Esophagus muscularis mucosa (tissue), 4 donors: ENCODE measurements at regions of chr19 and their contacts with region 1.

Region 1: GRCh38 chr19:19900729-19901444 is at the start of gene ZNF93:
- DNase-seq: peak; percentile 99
- H3K4me3 ChIP-seq: peak within 1 kb of the TSS; percentile 68 to 77 (median 74)
- H3K27ac ChIP-seq: peak within 1 kb of the TSS; percentile 86 to 94 (median 92)
- H3K4me1 ChIP-seq: peaks cover 9 to 16% (median 13%) of the 10 kb centered on the region in 4 donors
- H3K27me3 ChIP-seq: no peaks in the 10 kb centered on the region
- CTCF ChIP-seq: no peak
- EP300 ChIP-seq: no peak
- POLR2A ChIP-seq: no peak
- total RNA-seq, gene ZNF93: 1.2 to 4.1 (median 2.1) TPM

Region 2: DNA sequence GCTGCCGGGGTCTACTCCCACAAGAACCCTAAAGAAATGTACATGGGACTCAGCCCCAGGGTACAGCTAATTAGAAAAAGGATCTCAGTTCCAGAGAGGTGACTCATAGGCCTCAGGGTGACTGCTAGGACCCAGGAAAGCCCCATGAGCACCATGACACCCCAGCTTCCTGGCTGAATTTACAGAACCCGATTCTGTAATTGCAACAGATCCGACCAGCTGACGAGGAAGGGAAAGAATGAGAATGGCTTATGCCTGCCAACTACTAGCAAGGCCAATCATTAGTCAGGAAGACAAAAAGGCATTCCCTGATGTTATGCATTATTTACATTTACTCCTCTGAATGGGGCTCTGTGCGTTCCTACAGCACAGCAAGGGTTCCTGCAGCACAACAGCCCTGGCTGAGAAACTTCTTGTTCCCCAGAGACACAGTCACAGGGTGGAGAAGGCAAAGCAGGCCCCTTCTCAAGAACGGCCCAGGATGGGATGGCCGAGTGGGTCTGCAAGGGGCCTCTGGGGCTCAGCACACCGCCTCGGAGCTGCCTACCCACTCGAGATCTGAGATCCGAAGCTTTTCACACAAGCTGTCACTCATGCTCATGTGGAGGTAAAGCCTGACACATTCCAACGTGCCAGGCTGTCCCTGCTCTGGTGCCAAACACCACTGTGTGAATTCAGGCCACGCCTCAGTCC is 309.6 kb before region 1 on chr19:
- intact Hi-C with region 1: no loop called
- DNase-seq: no peak
- H3K4me3 ChIP-seq: peak overlapping the region in 1 of 4 donors; percentile 6
- H3K27ac ChIP-seq: peak overlapping the region; percentile 23 to 60 (median 34)
- H3K4me1 ChIP-seq: peaks cover 4 to 14% (median 13%) of the 10 kb centered on the region in 4 donors
- H3K27me3 ChIP-seq: no peaks in the 10 kb centered on the region
- CTCF ChIP-seq: no peak
- EP300 ChIP-seq: no peak
- POLR2A ChIP-seq: no peak

Region 3: GRCh38 chr19:19663256-19664038 is 237.4 kb before region 1 on chr19 and contains the start of gene ATP13A1:
- intact Hi-C with region 1: loop called (anchors 10 kb)
- DNase-seq: peak; percentile 98
- H3K4me3 ChIP-seq: peak within 1 kb of the TSS; percentile 73 to 99 (median 94)
- H3K27ac ChIP-seq: peak within 1 kb of the TSS; percentile 87 to 95 (median 92)
- H3K4me1 ChIP-seq: peaks cover 21 to 42% (median 34%) of the 10 kb centered on the region in 4 donors
- H3K27me3 ChIP-seq: no peaks in the 10 kb centered on the region
- CTCF ChIP-seq: peak in 2 of 3 experiments; percentile 23
- EP300 ChIP-seq: no peak
- POLR2A ChIP-seq: no peak
- total RNA-seq, gene ATP13A1: 59.3 to 104 (median 81.7) TPM

Region 4: GRCh38 chr19:19805480-19805879 is 95.4 kb before region 1 on chr19:
- intact Hi-C with region 1: no loop called
- DNase-seq: no peak
- H3K4me3 ChIP-seq: no peak overlapping the region
- H3K27ac ChIP-seq: no peak overlapping the region
- H3K4me1 ChIP-seq: peaks cover 0 to 7% (median 6%) of the 10 kb centered on the region in 4 donors
- H3K27me3 ChIP-seq: no peaks in the 10 kb centered on the region
- CTCF ChIP-seq: no peak
- EP300 ChIP-seq: no peak
- POLR2A ChIP-seq: no peak

Region 5: GRCh38 chr19:19865739-19866481 is 35.0 kb before region 1 on chr19 and contains the start of gene ZNF253:
- intact Hi-C with region 1: loop called (anchors 5 kb)
- DNase-seq: peak; percentile 99
- H3K4me3 ChIP-seq: peak within 1 kb of the TSS; percentile 64 to 82 (median 72)
- H3K27ac ChIP-seq: peak within 1 kb of the TSS; percentile 85 to 96 (median 91)
- H3K4me1 ChIP-seq: peaks cover 29 to 44% (median 35%) of the 10 kb centered on the region in 4 donors
- H3K27me3 ChIP-seq: no peaks in the 10 kb centered on the region
- CTCF ChIP-seq: no peak
- EP300 ChIP-seq: no peak
- POLR2A ChIP-seq: peak; percentile 74
- total RNA-seq, gene ZNF253: 5.1 to 7.1 (median 6.1) TPM

Region 6: GRCh38 chr19:20565321-20566018 is 664.6 kb after region 1 on chr19 and contains the start of gene ZNF737:
- intact Hi-C with region 1: loop called (anchors 10 kb)
- DNase-seq: peak; percentile 98
- H3K4me3 ChIP-seq: peak within 1 kb of the TSS; percentile 76 to 80 (median 77)
- H3K27ac ChIP-seq: peak within 1 kb of the TSS; percentile 87 to 90 (median 88)
- H3K4me1 ChIP-seq: peaks cover 10 to 46% (median 41%) of the 10 kb centered on the region in 4 donors
- H3K27me3 ChIP-seq: no peaks in the 10 kb centered on the region
- CTCF ChIP-seq: peak; percentile 12 to 53 (median 32)
- EP300 ChIP-seq: no peak
- POLR2A ChIP-seq: peak; percentile 27
- total RNA-seq, gene ZNF737: 8.0 to 11.0 (median 10.0) TPM